ENCODE measurements at regions of chr2 and their contacts with region 1.

Region 1: GRCh38 chr2:16840496-16841172 is 175.0 kb upstream of the CYRIA start:
- DNase-seq: no peak
- H3K4me3 ChIP-seq: no peak overlapping the region
- H3K27ac ChIP-seq: no peak overlapping the region
- H3K4me1 ChIP-seq: no peaks in the 10 kb centered on the region
- H3K27me3 ChIP-seq: peaks cover 6% of the 10 kb centered on the region
- CTCF ChIP-seq: no peak

Region 2: DNA sequence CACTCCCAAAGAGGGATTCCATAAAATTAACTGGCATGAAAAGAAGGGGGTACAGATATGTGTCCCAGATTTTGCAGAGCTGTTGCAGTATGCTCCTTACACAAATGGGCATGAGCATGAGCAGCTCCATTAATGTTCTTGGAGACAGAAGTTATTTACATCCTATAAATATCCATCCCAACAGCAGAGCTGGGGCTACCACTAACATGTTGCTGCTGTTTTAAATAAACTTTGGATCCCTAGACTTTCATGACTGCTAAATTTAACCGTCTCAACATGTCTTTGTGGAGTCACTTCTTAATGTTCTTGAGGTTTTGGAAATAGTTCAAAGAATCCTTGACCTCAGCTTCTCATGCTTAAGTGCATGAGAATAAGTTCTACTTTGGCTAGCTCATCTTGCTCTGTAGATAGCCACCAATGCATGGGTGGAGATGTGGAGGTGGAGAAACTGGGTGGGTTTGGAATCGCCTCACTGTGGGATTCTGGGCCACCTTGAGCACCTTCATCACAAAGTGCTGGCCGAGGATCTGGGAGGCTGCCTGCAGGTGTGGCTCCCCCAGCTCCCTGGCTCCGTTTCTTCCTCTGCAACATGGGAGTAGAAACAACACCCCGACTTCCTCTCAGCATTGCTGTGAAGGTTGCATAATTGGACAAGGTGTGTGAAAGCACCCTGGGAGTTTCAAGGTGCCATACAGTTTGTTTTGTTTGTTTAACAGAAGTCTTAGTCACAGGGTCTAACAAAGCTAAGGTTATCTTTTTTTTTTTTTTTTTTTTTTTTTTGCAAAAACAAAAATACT is 593.1 kb before region 1 on chr2:
- CTCF ChIA-PET with region 1: no interaction called
- POLR2A ChIA-PET with region 1: no interaction called
- intact Hi-C with region 1: no loop called
- DNase-seq: no peak
- H3K4me3 ChIP-seq: no peak overlapping the region
- H3K27ac ChIP-seq: no peak overlapping the region
- H3K4me1 ChIP-seq: no peaks in the 10 kb centered on the region
- H3K27me3 ChIP-seq: peaks cover 6% of the 10 kb centered on the region
- CTCF ChIP-seq: no peak

Region 3: GRCh38 chr2:16700551-16701259 is 139.9 kb before region 1 on chr2:
- CTCF ChIA-PET with region 1: no interaction called
- POLR2A ChIA-PET with region 1: no interaction called
- intact Hi-C with region 1: no loop called
- DNase-seq: no peak
- H3K4me3 ChIP-seq: no peak overlapping the region
- H3K27ac ChIP-seq: no peak overlapping the region
- H3K4me1 ChIP-seq: peaks cover 11% of the 10 kb centered on the region
- H3K27me3 ChIP-seq: no peaks in the 10 kb centered on the region
- CTCF ChIP-seq: no peak

Region 4: GRCh38 chr2:17442334-17442733 is 601.7 kb after region 1 on chr2:
- CTCF ChIA-PET with region 1: no interaction called
- POLR2A ChIA-PET with region 1: interaction called, 26 read pairs
- intact Hi-C with region 1: no loop called
- DNase-seq: peak; percentile 10
- H3K4me3 ChIP-seq: no peak overlapping the region
- H3K27ac ChIP-seq: no peak overlapping the region
- H3K4me1 ChIP-seq: peaks cover 4% of the 10 kb centered on the region
- H3K27me3 ChIP-seq: no peaks in the 10 kb centered on the region
- CTCF ChIP-seq: no peak

Measured in A673 (cell line).